Posterior vena cava (tissue), 2 donors: ENCODE measurements at regions of chr12 and their contacts with region 1.

Region 1: DNA sequence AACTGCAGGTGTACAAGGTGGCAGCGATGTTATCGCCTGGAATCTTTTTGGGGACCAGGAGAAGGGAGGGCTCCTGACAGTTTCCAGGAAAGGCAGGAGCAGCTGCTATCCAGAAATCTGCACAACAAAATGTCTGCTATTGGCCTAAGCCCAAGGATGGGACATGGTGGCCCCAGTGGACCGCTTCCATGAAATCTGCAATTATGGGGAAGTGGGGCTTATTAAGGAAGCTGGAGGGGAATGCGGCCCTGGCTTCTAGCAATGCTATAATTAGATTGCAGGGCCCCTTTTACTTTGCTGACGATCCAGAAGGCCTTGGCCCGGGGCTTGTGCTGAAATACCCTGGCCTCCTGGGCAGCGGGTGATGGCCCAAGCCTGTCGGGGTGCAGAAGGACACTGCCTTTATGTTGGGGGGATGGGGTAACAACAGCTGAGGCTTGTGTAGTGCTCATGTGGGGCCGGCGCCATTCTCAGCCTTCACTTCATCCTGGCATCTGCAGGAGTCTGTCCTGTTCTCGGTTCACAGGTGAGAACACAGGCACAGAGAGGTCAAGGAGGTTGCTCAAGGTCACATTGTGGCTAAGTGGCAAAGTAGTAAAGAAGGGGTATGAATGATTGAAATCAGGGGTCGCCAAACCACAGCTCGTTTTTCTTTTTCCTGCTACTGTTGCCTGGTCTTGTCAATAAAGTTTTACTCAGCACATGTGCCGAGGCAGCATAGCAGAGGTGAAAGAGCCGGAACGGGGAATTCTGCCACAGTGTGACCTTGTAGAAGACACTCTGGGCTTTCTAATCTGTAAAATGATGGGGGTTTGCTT is 153.5 kb downstream of the RBM19 start:
- DNase-seq: no peak

Region 2: DNA sequence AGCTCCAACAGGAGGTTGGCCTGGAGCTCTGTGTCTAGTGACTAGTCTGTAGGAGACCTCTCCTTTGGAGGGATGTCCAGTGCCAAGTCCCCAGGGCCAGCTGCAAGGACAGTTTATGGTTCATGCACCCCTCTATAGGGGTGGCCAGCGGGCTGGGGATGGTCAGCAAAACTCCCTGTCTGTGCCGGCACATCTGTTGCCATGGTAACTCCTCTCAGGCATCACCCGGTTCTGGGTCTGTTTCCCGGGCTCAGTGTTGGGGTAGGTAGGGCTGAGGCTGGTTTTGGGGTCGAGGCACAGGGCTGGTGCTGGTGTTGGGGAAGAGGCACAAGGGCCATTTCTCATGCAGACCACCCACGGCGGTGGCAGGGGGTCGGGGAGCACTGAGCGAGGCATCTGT is 43.3 kb before region 1 on chr12:
- intact Hi-C with region 1: no loop called
- DNase-seq: no peak

Region 3: GRCh38 chr12:113794774-113795173 is 17.8 kb before region 1 on chr12:
- intact Hi-C with region 1: no loop called
- DNase-seq: peak; percentile 29

Region 4: GRCh38 chr12:115449526-115449925 is 1636.9 kb after region 1 on chr12:
- intact Hi-C with region 1: loop called in 1 of 2 experiments (anchors 5 kb)
- DNase-seq: no peak